Calu3 (cell line): ENCODE measurements at regions of chr20 and their contacts with region 1.

Region 1: DNA sequence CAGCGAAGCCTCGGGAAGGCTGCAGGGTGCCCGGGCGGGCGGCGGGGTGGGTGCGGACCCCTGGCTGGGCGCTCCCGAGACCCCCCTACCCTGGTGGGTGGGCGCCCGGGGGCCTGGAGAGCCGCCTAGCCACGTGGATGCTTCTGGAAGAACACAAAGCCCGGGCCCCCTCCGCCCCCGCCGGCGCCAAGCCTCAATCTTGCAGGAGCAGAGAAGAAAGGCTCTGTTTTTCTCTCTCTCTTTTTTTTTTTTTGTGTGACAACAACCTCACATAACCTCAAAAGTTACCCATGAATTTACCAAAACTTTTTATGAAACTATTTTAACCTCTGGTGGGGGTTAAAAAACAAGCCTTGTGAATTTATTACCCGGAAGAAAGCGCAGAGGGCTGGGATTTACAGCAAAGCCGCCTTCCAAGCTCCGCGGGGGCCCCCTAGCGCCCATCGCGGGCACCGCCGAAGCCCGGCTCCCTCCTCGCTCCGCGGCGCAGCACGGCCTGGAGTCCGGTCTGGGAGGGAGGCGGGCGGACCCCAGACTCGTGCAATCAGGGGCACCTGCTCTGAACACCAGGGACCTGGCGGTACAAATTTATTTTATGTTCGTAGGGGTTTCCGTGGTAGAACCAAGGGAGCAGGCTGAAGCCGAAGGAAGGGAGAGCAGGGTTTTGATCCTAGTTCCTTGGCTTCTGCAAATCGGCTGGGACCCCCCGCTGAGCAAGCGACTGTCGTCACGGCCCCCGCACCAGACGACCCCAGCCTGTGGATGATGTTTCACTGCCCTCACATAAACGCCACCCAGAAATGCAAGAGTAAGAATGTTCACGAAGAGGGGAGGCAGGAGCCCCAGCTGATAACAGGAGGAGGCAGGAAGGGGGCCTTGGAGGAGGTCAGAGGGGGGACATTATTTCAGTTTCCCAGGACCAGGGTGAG is 58.9 kb downstream of the ZNF831 start:
- DNase-seq: peak; percentile 95
- H3K4me3 Mint-ChIP-seq: peak overlapping the region; percentile 60
- H3K27ac Mint-ChIP-seq: no peak overlapping the region
- H3K4me1 Mint-ChIP-seq: peaks cover 10% of the 10 kb centered on the region
- H3K27me3 Mint-ChIP-seq: peaks cover 100% of the 10 kb centered on the region
- CTCF ChIP-seq: peak; percentile 98

Region 2: DNA sequence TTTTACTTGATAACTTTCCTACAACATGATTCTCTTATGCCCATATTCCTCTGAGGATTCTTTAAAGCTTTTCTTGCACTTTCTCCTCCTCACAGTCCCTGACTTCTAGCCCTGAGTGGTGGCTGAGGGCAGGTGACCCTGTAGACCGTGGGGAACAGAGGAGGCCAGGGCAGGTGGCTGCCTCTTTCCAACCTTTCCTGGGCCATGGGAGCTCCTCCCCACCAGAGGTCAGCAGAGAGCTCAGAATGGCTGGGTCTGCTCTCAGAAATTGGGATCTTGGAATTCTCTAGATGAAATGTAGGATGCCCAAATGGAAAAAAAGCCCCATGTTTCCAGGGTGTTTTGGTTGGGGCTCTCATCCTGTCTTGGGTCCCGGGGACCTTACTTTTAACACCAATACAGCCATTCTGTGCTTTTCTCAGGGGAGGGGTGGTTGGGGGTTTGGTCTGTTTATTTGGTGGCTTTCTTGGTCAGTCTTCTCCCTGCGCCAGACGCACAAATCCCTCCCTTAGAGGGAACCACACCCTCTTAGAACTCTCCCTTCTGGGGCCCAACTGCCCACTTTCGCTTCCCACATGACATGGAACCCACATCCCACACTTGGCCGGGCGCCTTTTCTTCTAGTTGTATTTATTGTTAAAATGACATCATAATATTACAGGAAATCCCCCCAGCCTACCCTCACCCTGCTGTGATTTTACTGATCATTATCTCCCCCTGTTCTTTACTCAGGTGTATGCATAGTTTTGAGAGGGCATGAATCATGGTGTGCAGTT is 352.1 kb before region 1 on chr20:
- CTCF ChIA-PET with region 1: interaction called, 12 read pairs
- intact Hi-C with region 1: loop called (anchors 2 kb)
- DNase-seq: peak; percentile 91
- H3K4me3 Mint-ChIP-seq: no peak overlapping the region
- H3K27ac Mint-ChIP-seq: no peak overlapping the region
- H3K4me1 Mint-ChIP-seq: peaks cover 21% of the 10 kb centered on the region
- H3K27me3 Mint-ChIP-seq: no peaks in the 10 kb centered on the region
- CTCF ChIP-seq: peak; percentile 96

Region 3: GRCh38 chr20:59055295-59055694 is 167.2 kb before region 1 on chr20:
- CTCF ChIA-PET with region 1: interaction called, 4 read pairs
- intact Hi-C with region 1: loop called (anchors 10 kb)
- DNase-seq: peak; percentile 37
- H3K4me3 Mint-ChIP-seq: no peak overlapping the region
- H3K27ac Mint-ChIP-seq: no peak overlapping the region
- H3K4me1 Mint-ChIP-seq: no peaks in the 10 kb centered on the region
- H3K27me3 Mint-ChIP-seq: peaks cover 65% of the 10 kb centered on the region
- CTCF ChIP-seq: peak; percentile 52

Region 4: DNA sequence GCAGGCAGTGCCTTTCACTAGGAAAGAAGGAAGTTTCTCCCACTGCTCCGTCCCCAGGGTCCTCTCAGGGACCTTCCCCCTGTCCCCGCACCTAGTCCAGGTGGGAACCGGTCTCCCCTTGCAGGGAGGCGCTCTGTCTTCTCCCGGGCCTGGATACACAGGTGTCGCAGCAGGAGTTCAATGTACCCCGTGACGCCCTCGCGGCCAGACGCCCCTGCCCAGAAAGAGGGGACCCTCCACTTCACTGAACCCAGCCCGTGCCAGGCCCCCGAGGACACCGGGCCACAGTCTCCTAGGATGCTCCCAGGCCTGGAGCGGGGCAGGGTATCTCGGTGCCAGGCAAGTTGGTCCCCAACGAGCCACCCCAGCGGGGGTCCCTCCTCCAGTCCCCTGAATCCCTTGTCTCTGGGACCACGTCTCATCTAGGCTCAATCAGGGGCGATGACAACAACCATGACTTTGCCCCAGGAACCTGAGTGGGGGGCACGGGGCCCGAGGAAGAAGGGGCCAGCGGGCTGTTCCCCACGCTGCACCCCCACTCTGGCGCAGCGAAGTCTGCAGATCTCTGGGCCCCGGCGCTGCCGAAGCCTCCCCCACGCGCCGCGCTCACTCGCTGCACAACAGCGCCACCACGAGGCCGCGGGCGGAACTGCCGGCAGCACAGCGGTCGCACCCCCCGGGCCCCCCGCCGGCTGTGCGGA is 180.9 kb after region 1 on chr20:
- CTCF ChIA-PET with region 1: no interaction called
- intact Hi-C with region 1: loop called (anchors 10 kb)
- DNase-seq: peak; percentile 77
- H3K4me3 Mint-ChIP-seq: no peak overlapping the region
- H3K27ac Mint-ChIP-seq: no peak overlapping the region
- H3K4me1 Mint-ChIP-seq: no peaks in the 10 kb centered on the region
- H3K27me3 Mint-ChIP-seq: no peaks in the 10 kb centered on the region
- CTCF ChIP-seq: peak; percentile 98

Region 5: DNA sequence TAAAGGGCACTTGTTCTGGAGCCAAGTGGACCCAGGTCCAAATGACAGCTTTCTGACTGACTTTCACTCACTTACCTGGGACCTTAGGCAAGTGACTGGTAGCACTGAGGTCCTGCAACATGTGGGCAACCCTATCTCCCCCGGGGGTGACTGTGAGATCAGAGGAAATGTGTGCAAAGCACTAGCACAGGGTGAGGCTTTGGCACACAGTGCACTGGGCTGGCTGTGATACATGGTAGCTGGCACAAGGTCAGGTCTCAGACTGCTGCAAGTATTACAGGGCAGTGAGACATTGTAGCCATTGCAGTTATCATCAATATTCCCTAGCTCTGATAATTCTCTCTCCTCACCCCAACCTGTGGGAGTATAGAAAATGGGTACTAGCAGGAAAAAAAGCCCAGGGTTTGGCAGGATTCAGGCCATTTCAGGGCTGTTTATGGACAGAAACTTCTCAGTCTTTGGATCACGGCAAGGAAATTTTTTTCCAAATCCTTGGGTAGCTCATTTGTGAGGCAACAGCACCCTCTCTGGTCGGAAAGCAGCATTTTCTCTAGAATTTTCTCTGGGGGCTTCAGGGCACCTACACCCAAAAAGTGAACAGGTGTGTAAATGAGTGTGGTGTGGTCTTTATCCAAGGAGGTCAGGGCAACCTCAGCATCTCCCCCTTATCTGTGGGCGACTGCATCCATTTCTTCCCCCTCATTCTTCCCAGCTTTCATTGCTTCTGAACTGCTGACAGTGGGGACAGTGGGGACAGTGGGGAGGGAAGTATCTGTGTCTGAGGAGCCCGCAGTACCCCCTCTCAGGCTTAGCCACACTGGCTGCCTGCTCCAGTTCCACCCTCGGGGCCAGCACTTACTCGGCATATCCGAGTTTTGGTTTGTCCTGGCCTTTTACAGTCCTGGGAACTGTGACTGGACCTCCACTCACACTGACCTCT is 233.2 kb after region 1 on chr20:
- CTCF ChIA-PET with region 1: interaction called, 3 read pairs
- intact Hi-C with region 1: loop called (anchors 5 kb)
- DNase-seq: peak; percentile 34
- H3K4me3 Mint-ChIP-seq: no peak overlapping the region
- H3K27ac Mint-ChIP-seq: no peak overlapping the region
- H3K4me1 Mint-ChIP-seq: no peaks in the 10 kb centered on the region
- H3K27me3 Mint-ChIP-seq: peaks cover 100% of the 10 kb centered on the region
- CTCF ChIP-seq: peak; percentile 82